HEK293 (cell line): ENCODE measurements at regions of chr6 and their contacts with region 1.

Region 1: DNA sequence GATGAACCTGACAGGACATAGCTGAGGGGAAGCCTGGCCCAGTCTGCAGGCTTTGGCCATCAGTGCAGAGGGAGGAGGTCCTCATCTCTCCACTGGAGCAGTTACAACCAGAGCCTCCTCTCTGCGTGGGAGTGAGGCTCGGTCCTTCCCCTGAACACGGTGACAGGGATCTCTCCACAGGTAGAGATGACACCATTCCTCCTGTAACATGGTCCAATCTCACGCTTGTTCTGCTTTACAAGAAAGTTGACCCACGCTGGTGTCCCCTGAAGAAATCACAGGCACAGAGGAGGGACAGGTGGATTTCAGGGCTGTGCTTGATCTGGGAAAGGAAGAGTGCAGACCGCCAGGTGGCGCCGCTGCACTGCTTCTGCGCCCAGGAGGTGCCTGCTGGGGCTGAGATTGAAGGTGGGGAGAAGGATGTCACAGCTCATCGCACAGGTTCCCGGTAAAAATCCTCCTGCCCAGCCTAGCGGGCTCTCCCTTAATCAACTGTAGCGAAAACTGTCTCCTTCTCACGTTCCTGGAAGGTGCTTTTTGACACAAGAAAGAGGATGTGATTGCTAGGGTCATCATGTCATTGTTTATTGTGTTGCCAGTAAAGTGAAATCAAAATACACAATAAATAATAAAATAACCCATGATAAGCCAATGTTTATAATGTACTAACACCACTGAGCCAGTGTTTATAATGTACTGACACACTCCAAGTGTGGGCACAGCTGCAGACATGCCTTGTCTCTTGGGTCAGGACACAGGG is 20.4 kb downstream of the HLA-G start:
- H3K4me3 ChIP-seq: no peak overlapping the region
- H3K27ac ChIP-seq: no peak overlapping the region
- H3K4me1 ChIP-seq: no peaks in the 10 kb centered on the region
- CTCF ChIP-seq: peak; percentile 95

Region 2: DNA sequence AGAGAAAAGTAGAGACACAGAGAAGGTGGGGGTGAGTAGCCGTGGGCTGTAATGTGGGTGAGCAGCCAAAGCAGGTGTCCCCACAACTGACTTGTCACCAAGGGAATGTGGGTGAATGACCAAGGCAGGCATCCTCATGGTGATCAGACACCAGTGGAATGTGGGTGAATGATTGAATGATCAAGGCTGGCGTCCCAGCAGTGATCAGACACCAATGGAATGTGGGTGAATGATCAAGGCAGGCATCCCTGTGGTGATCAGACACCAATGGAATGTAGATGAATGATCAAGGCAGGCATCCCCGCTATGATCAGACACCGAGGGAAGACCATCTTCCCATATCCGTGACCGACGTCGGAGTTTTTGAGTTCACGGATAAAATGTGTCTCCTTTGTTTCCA is 596.3 kb before region 1 on chr6:
- CTCF ChIA-PET with region 1: no interaction called
- POLR2A ChIA-PET with region 1: no interaction called
- H3K4me3 ChIP-seq: no peak overlapping the region
- H3K27ac ChIP-seq: no peak overlapping the region
- H3K4me1 ChIP-seq: no peaks in the 10 kb centered on the region
- CTCF ChIP-seq: no peak

Region 3: DNA sequence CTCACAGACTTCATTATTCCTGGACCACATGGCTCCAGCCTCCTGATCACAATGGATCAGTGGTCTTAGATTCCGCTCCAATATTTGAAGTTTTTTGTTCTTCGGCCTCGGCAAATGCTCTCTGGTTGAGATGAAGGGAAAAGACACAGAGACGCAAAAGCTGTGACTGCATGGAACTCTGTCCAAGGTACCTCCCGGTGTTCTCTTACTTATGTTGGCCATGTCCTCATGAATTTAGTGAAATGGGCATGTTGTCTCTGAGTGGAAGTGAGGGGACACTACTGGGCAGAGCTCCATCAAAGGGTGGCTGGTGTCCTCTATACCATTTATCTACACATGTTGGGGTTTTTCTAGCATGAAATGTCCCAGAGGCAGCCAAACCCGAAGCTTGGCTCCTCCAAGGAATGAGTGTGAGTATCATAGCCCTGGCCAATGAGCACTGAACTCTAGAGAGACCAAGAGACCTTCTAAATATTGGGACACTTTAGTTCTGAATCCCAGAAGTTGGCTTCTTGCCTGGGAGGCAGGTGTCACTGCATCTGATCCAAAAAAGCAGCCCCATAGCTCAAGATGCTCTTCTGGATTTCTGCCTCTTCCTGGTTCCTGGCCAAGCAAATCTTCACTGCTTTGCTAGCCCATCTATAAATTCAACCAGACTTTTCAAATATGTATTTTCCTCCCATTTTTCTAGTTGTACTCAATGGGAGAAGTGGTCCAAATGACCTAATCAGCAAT is 13.6 kb after region 1 on chr6:
- CTCF ChIA-PET with region 1: interaction called, 13 read pairs
- POLR2A ChIA-PET with region 1: no interaction called
- H3K4me3 ChIP-seq: no peak overlapping the region
- H3K27ac ChIP-seq: no peak overlapping the region
- H3K4me1 ChIP-seq: no peaks in the 10 kb centered on the region
- CTCF ChIP-seq: no peak

Region 4: DNA sequence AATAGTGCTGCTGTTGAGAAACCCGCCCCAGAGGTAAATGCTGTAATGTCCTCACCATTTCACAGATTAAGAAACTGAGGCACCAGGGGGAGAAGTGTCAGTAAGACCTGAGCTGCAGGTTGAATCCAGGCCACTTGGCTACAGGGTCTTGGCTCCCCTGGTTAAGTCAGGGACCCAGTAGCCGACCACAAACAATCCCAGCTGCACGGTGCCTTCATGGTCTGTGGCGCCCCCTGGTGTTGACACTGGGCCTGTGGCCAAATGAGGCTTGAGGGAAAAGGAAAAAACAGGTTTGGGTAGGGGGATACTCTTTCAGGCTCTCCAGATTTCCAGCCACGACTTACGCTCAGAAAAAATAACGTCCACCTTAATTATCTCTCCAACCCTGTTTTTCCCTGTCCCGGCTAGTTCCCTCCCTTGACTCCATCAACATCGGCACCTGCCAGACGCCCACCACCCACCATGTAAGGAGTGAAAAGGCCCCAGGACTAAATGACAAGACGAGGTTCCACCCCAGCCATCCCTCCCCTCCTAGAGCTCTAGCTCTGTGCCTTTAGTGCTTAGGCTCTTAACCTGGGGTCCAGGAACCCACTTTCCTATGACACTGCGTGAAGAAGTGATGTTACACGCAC is 165.4 kb after region 1 on chr6:
- CTCF ChIA-PET with region 1: interaction called, 76 read pairs
- POLR2A ChIA-PET with region 1: no interaction called
- H3K4me3 ChIP-seq: no peak overlapping the region
- H3K27ac ChIP-seq: no peak overlapping the region
- H3K4me1 ChIP-seq: no peaks in the 10 kb centered on the region
- CTCF ChIP-seq: peak; percentile 67; the same call in 1 of the 2 replicates

Region 5: GRCh38 chr6:30037182-30037788 is 189.2 kb after region 1 on chr6:
- CTCF ChIA-PET with region 1: interaction called, 10 read pairs
- POLR2A ChIA-PET with region 1: no interaction called
- H3K4me3 ChIP-seq: no peak overlapping the region
- H3K27ac ChIP-seq: no peak overlapping the region
- H3K4me1 ChIP-seq: peaks cover 2% of the 10 kb centered on the region
- CTCF ChIP-seq: peak; percentile 55; the same call in 1 of the 2 replicates